Mammary epithelial cell (primary cell): ENCODE measurements at regions of chr7 and their contacts with region 1.

Region 1: GRCh38 chr7:92904292-92905131 is 68.1 kb upstream of the CDK6 start:
- DNase-seq: peak; percentile 98
- H3K4me3 ChIP-seq: no peak overlapping the region
- H3K27ac ChIP-seq: peak overlapping the region; percentile 96
- H3K4me1 ChIP-seq: peaks cover 23% of the 10 kb centered on the region
- H3K27me3 ChIP-seq: no peaks in the 10 kb centered on the region
- CTCF ChIP-seq: no peak

Region 2: DNA sequence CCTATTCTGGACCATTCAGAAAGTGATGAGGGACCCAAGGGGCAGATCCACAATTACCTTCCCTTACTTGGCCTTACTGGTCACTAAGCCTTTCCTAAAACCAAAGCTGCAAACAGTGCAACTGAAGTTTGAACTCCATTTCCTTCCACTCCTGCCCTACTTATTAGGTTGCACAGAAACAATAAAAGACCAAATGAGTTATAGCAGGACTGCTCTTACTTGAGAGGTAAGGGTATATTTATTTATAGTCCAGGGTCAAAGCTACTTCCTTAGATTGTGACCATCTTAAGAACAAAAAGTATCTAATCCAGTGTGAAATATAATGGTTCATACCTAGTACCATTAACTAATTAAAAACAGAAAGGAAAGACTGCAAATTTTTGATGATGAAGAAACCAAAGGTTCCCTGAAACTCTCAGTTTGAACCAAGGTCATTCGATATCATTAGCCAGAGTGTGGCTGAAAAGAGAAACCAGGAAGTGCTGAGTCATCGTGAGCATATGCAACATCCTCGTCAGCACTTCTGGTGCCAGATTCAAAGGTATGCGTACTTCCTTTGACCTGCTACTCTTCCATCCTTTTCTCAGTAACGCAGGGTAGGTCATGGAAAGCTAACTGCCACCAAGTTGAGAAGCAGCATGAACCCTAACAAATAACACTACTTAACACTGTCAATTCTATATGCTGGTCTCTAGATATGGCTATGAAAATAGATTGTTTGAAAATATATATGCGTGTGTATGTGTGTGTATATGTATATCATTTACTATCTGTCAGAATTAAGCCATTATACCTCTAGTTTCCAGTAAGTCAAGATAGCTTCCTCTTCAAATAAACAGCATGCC is 94.9 kb before region 1 on chr7:
- CTCF ChIA-PET with region 1: no interaction called
- dilution Hi-C with region 1: no loop called
- in situ Hi-C with region 1: no loop called
- intact Hi-C with region 1: no loop called
- DNase-seq: peak; percentile 91
- H3K4me3 ChIP-seq: peak overlapping the region in 1 of 3 experiments; percentile 6
- H3K27ac ChIP-seq: peak overlapping the region; percentile 90
- H3K4me1 ChIP-seq: peaks cover 51% of the 10 kb centered on the region
- H3K27me3 ChIP-seq: no peaks in the 10 kb centered on the region
- CTCF ChIP-seq: no peak

Region 3: GRCh38 chr7:92916674-92917224 is 12.2 kb after region 1 on chr7:
- CTCF ChIA-PET with region 1: no interaction called
- dilution Hi-C with region 1: no loop called
- in situ Hi-C with region 1: no loop called
- intact Hi-C with region 1: loop called (anchors 1 kb)
- DNase-seq: peak; percentile 78
- H3K4me3 ChIP-seq: no peak overlapping the region
- H3K27ac ChIP-seq: peak overlapping the region; percentile 92
- H3K4me1 ChIP-seq: peaks cover 13% of the 10 kb centered on the region
- H3K27me3 ChIP-seq: no peaks in the 10 kb centered on the region
- CTCF ChIP-seq: no peak

Region 4: DNA sequence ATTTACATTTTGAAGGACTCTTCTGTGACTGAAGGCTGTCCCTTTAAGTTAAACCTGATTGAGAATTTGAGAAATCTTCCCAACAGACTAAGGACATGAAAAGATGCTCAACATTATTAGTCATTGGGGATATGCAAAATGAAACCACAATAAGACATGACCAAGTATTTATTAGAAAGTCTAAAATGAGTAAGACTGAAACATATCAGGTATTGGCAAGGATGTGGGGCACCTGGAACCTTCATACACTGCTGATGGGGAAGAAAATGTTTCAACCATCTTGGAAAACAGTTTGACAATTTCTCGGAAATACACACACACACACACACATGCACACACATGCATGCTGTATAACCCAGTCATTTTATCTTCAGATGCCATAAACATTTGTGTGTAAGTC is 64.0 kb after region 1 on chr7:
- CTCF ChIA-PET with region 1: no interaction called
- dilution Hi-C with region 1: no loop called
- in situ Hi-C with region 1: no loop called
- intact Hi-C with region 1: loop called (anchors 2 kb)
- DNase-seq: peak; percentile 76
- H3K4me3 ChIP-seq: no peak overlapping the region
- H3K27ac ChIP-seq: no peak overlapping the region
- H3K4me1 ChIP-seq: peaks cover 9% of the 10 kb centered on the region
- H3K27me3 ChIP-seq: no peaks in the 10 kb centered on the region
- CTCF ChIP-seq: no peak

Region 5: GRCh38 chr7:93043385-93043985 is 139.0 kb after region 1 on chr7:
- CTCF ChIA-PET with region 1: no interaction called
- dilution Hi-C with region 1: no loop called
- in situ Hi-C with region 1: no loop called
- intact Hi-C with region 1: loop called (anchors 10 kb)
- DNase-seq: peak; percentile 97
- H3K4me3 ChIP-seq: peak overlapping the region; percentile 22 to 28 (median 27)
- H3K27ac ChIP-seq: peak overlapping the region; percentile 83
- H3K4me1 ChIP-seq: peaks cover 28% of the 10 kb centered on the region
- H3K27me3 ChIP-seq: no peaks in the 10 kb centered on the region
- CTCF ChIP-seq: peak in 1 of 2 donors; percentile 13